Mammary epithelial cell (primary cell): ENCODE measurements at regions of chr5 and their contacts with region 1.

Region 1: DNA sequence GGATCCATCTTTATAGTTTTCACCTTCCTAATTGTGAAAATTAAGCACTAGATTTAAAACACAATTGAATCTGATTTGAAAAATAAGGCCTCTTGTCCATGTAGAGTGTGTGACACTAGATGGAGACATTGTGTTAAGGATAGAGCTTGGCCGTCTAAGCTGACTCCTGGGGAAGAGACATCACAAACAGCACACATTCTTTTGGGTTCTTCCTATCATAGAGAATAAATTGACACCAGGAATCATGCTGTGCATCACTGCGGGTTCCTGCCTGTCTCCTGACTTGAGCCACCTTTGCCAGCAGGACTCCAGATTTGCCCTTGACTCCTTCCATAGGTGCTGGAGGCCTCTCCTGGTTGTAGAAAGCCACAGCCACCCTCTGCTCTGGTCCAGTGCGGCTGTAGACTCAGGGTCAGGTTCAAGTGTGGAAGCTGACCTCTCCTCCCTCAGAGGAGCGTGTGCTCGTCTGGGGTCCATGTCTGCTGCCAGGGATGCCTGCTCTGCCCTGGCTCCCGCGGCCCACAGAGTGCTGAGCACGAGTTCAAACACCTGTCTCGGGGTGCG is 11.2 kb downstream of the ROPN1L start:
- DNase-seq: peak; percentile 64
- H3K4me3 ChIP-seq: no peak overlapping the region
- H3K27ac ChIP-seq: no peak overlapping the region
- H3K4me1 ChIP-seq: peaks cover 43% of the 10 kb centered on the region
- H3K27me3 ChIP-seq: no peaks in the 10 kb centered on the region
- CTCF ChIP-seq: peak; percentile 79 to 88

Region 2: DNA sequence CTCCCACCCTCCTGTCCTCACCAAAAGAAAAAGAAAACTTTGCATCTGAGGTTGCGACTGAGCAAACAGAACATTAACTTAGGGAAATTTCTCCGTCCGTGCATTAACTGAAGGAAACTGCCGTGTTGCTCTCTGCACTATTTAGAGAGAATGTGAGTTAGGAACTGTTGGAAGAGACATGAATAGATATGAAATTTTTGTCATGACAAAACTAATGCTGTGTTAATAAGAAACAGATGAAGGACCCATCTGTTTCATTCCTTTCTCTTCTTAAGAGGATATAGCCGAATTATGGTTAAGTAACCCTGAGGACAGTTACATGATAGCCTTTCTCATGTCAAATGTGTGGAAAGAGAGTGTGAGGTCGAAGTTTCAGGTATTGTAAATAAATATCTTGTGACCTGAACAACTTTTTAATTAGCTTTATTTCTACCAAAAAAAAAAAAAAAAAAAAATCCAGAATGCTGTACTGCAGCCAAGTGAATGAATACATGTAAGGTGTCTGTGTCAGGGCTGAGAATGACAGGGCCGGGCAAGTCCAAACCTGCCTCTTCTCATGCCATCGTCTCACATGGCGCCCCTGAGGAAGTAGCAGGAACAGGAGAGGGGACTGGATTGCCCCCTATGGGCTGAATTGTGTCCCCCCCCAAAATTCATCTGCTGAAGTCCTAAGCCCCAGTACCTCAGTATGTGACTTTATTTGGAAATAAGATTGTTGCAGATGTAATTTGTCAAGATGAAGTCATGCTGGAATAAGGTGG is 75.4 kb after region 1 on chr5:
- CTCF ChIA-PET with region 1: no interaction called
- dilution Hi-C with region 1: no loop called
- in situ Hi-C with region 1: no loop called
- intact Hi-C with region 1: loop called (anchors 2 kb)
- DNase-seq: peak; percentile 73
- H3K4me3 ChIP-seq: no peak overlapping the region
- H3K27ac ChIP-seq: no peak overlapping the region
- H3K4me1 ChIP-seq: peaks cover 15% of the 10 kb centered on the region
- H3K27me3 ChIP-seq: no peaks in the 10 kb centered on the region
- CTCF ChIP-seq: peak in 1 of 2 donors; percentile 48

Region 3: GRCh38 chr5:10539687-10539998 is 86.8 kb after region 1 on chr5:
- CTCF ChIA-PET with region 1: no interaction called
- dilution Hi-C with region 1: no loop called
- in situ Hi-C with region 1: no loop called
- intact Hi-C with region 1: no loop called
- DNase-seq: no peak
- H3K4me3 ChIP-seq: no peak overlapping the region
- H3K27ac ChIP-seq: no peak overlapping the region
- H3K4me1 ChIP-seq: no peaks in the 10 kb centered on the region
- H3K27me3 ChIP-seq: peaks cover 5% of the 10 kb centered on the region
- CTCF ChIP-seq: no peak

Region 4: GRCh38 chr5:10627160-10627701 is 174.4 kb after region 1 on chr5:
- CTCF ChIA-PET with region 1: interaction called, 7 read pairs
- dilution Hi-C with region 1: no loop called
- in situ Hi-C with region 1: loop called (anchors 5 kb)
- intact Hi-C with region 1: loop called (anchors 1 kb)
- DNase-seq: no peak
- H3K4me3 ChIP-seq: peak overlapping the region; percentile 18 to 42 (median 32)
- H3K27ac ChIP-seq: no peak overlapping the region
- H3K4me1 ChIP-seq: peaks cover 22% of the 10 kb centered on the region
- H3K27me3 ChIP-seq: no peaks in the 10 kb centered on the region
- CTCF ChIP-seq: no peak

Region 5: DNA sequence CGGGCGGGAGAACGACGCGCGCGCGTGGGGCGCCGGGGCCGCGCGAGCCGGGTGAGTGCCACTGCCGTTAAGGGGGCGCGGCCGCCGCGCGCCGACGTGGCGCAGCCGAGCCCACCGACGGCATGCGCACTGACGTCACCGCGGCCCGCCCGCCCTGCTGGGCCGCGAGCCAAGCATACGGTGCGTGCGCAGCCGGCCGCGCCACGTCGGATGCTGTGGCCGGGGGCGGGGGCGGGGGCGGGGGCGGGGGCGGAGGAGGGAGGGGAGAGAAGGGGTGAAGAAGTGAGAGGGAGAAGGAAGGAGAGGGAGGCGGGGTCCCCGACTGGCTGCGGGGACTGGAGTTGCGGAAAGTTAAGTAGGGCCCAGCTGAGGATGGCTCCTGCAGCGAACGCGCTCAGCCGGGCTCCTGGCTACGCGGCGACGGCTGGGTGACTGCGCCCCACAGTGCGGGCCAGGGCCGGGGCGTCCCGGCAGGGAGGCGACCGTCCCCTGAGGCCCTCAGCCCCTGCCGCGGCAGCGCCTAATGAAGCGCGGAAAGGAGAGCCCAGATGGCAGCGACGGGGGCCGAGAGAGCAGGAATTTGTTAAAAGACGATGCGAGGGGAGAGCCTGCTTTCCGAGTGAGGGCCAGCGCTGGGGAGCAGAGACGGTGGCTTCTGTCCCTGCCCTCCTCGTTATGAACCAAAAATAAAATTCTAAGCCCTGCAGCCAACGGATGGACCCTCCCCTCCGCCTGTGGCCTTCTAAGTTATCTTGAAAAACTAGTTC is 308.5 kb after region 1 on chr5 and contains the start of gene DAP:
- CTCF ChIA-PET with region 1: no interaction called
- dilution Hi-C with region 1: no loop called
- in situ Hi-C with region 1: no loop called
- intact Hi-C with region 1: loop called (anchors 2 kb)
- DNase-seq: peak; percentile 71
- H3K4me3 ChIP-seq: peak within 1 kb of the TSS; percentile 57 to 97 (median 80)
- H3K27ac ChIP-seq: peak within 1 kb of the TSS; percentile 76
- H3K4me1 ChIP-seq: peaks cover 3% of the 10 kb centered on the region
- H3K27me3 ChIP-seq: no peaks in the 10 kb centered on the region
- CTCF ChIP-seq: no peak
- total RNA-seq, gene DAP: 15.3 to 102 TPM

Region 6: GRCh38 chr5:11182441-11183268 is 729.8 kb after region 1 on chr5:
- CTCF ChIA-PET with region 1: no interaction called
- dilution Hi-C with region 1: no loop called
- in situ Hi-C with region 1: no loop called
- intact Hi-C with region 1: loop called (anchors 2 kb)
- DNase-seq: no peak
- H3K4me3 ChIP-seq: no peak overlapping the region
- H3K27ac ChIP-seq: no peak overlapping the region
- H3K4me1 ChIP-seq: no peaks in the 10 kb centered on the region
- H3K27me3 ChIP-seq: no peaks in the 10 kb centered on the region
- CTCF ChIP-seq: peak; percentile 10 to 48

Region 7: DNA sequence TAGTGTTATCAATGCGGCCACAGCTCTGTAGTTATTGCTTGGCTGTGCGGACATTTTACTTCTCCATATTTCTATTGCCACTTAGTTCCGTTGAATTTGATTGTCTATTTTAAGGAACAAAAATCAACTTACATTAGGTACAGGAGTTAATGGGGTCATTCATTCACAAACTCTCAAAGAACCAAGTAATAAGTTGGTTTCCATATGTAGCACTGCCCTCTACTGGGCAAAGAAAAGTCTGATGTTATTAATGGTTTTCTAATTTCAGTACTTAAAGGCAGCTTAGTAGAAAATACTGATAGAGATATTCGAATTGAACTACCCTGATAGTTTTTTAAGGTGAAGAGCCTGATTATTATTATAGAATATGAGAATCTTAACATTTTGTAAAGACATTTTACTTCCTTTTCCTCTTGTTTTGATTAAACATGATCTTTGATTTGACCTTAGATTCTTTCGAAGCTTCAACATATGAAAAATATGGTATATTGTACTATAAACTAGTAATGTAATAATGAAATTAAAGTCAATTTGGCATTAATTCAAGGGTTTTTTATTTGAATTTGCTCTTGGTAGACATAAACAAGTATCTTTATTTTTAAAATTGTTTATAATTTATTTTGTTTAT is 1570.9 kb after region 1 on chr5:
- CTCF ChIA-PET with region 1: no interaction called
- dilution Hi-C with region 1: no loop called
- in situ Hi-C with region 1: loop called in 1 of 2 experiments (anchors 25 kb)
- intact Hi-C with region 1: no loop called
- DNase-seq: peak; percentile 18
- H3K4me3 ChIP-seq: no peak overlapping the region
- H3K27ac ChIP-seq: no peak overlapping the region
- H3K4me1 ChIP-seq: no peaks in the 10 kb centered on the region
- H3K27me3 ChIP-seq: no peaks in the 10 kb centered on the region
- CTCF ChIP-seq: peak; percentile 53 to 61